ENCODE measurements at regions of chr1 and their contacts with region 1.

Region 1: GRCh38 chr1:112715264-112716053 is at the start of gene PPM1J:
- DNase-seq: peak; percentile 86 to 99 (median 91)
- ATAC-seq: peak; percentile 89
- H3K4me3 ChIP-seq: peak within 1 kb of the TSS; percentile 81
- H3K4me3 Mint-ChIP-seq: peak within 1 kb of the TSS; percentile 86 to 95 (median 92)
- H3K27ac ChIP-seq: peak within 1 kb of the TSS; percentile 34
- H3K27ac Mint-ChIP-seq: peak within 1 kb of the TSS in 8 of 9 donors; percentile 63 to 91 (median 82)
- H3K4me1 ChIP-seq: peaks cover 13% of the 10 kb centered on the region in 2 donors
- H3K4me1 Mint-ChIP-seq: peaks cover 17 to 37% (median 21%) of the 10 kb centered on the region in 7 donors
- H3K27me3 ChIP-seq: no peaks in the 10 kb centered on the region
- H3K27me3 Mint-ChIP-seq: peaks cover 0 to 45% (median 12%) of the 10 kb centered on the region in 5 donors
- total RNA-seq, gene PPM1J: 0.46 to 1.6 (median 0.50) TPM in 3 of 5 experiments, not detected in the others

Region 2: GRCh38 chr1:112390775-112391602 is 324.5 kb before region 1 on chr1:
- CTCF ChIA-PET with region 1: interaction called, 4 read pairs
- POLR2A ChIA-PET with region 1: no interaction called
- intact Hi-C with region 1: loop called (anchors 1 to 2 kb)
- DNase-seq: peak; percentile 49 to 78 (median 75)
- ATAC-seq: peak; percentile 90
- H3K4me3 ChIP-seq: no peak overlapping the region
- H3K4me3 Mint-ChIP-seq: peak overlapping the region in 5 of 10 donors; percentile 7 to 78 (median 54)
- H3K27ac ChIP-seq: no peak overlapping the region
- H3K27ac Mint-ChIP-seq: peak overlapping the region in 1 of 9 donors; percentile 62
- H3K4me1 ChIP-seq: peaks cover 7 to 9% of the 10 kb centered on the region in 2 donors
- H3K4me1 Mint-ChIP-seq: peaks cover 7 to 34% (median 15%) of the 10 kb centered on the region in 7 donors
- H3K27me3 ChIP-seq: no peaks in the 10 kb centered on the region
- H3K27me3 Mint-ChIP-seq: peaks cover 9 to 50% (median 39%) of the 10 kb centered on the region in 5 donors

Region 3: GRCh38 chr1:112674439-112674985 is 40.9 kb before region 1 on chr1 and contains the start of gene MOV10:
- CTCF ChIA-PET with region 1: interaction called, 4 read pairs
- POLR2A ChIA-PET with region 1: interaction called, 7 read pairs
- intact Hi-C with region 1: loop called (anchors 1 to 2 kb)
- DNase-seq: peak; percentile 38 to 62 (median 59)
- ATAC-seq: peak; percentile 73
- H3K4me3 ChIP-seq: peak within 1 kb of the TSS; percentile 92
- H3K4me3 Mint-ChIP-seq: peak within 1 kb of the TSS; percentile 94 to 99 (median 97)
- H3K27ac ChIP-seq: peak within 1 kb of the TSS; percentile 88
- H3K27ac Mint-ChIP-seq: peak within 1 kb of the TSS; percentile 90 to 98 (median 95)
- H3K4me1 ChIP-seq: peaks cover 17 to 19% of the 10 kb centered on the region in 2 donors
- H3K4me1 Mint-ChIP-seq: peaks cover 37 to 62% (median 58%) of the 10 kb centered on the region in 7 donors
- H3K27me3 ChIP-seq: no peaks in the 10 kb centered on the region
- H3K27me3 Mint-ChIP-seq: no peaks in the 10 kb centered on the region
- total RNA-seq, gene MOV10: 85.5 to 126 (median 90.1) TPM

Region 4: DNA sequence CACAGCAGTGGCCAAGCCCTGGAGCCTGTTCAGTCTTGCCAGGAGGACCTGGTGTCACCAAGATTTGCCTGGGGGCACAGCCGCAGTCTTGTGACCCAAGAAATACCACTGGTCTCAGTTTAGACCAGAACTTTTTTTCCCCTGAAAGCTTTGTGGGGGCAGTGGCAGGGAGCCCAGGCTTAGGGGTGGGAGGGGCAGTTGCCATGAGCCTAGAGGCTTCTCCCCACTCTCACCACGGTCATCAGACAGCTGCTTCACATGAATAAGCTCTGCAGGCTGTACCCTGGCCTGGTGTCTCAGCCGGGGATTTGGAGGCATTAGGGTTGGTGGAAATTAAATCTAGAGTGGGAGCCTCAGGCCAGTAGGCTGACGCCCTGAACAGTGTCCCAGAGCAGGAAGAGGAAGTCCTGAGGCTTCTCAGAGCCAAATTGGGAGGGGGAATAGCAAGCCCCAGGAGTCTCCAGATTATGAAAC is 166.8 kb after region 1 on chr1:
- CTCF ChIA-PET with region 1: interaction called, 3 read pairs
- POLR2A ChIA-PET with region 1: no interaction called
- intact Hi-C with region 1: loop called (anchors 1 kb)
- DNase-seq: no peak
- ATAC-seq: peak; percentile 16
- H3K4me3 ChIP-seq: no peak overlapping the region
- H3K4me3 Mint-ChIP-seq: no peak overlapping the region
- H3K27ac ChIP-seq: no peak overlapping the region
- H3K27ac Mint-ChIP-seq: no peak overlapping the region
- H3K4me1 ChIP-seq: no peaks in the 10 kb centered on the region
- H3K4me1 Mint-ChIP-seq: peaks cover 0 to 3% (median 0%) of the 10 kb centered on the region in 7 donors
- H3K27me3 ChIP-seq: no peaks in the 10 kb centered on the region
- H3K27me3 Mint-ChIP-seq: peaks cover 0 to 24% (median 4%) of the 10 kb centered on the region in 5 donors

Region 5: DNA sequence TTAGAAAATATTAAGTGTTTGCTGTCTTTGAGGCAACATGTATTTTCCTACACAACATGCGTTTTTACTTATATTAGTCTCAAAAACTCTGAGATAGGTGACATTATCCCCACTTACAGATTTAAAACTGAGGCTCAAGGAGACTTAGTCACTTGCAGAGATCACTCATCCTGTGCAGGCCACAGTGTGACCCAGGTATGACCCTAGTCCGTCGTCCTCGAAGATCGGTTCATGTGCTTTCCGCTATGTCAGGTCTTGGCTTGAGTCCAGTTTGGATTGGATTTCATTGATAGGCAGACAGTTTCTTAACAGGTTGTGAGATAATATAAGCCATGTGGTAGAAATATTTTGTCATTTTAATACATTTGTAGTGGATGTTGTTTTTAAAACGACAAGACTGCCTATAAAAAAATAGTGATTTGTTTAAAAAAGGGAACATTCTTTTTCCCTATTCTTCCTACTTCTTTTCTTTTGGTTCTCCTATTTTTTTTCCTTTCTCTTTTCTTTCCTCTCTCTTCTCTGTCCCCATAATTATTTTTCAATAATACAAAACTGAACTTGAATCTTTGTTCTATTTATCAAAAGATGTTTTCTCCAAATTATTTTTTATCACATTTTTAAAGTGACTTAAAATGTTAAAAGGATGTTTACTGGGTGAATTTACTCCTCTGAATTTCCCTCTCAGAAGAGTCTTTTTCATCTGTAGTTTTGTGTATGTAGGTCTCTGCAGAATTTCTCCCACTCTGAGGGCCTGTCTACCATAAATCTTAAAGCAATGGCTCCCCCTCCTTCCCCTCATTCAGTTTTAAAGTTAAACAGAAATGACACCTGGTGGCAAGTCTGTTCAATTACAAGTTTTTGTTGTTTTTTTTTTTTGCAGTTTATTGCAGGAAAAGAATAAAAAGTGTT is 962.0 kb after region 1 on chr1:
- CTCF ChIA-PET with region 1: interaction called, 5 read pairs
- POLR2A ChIA-PET with region 1: no interaction called
- intact Hi-C with region 1: loop called (anchors 1 to 2 kb)
- DNase-seq: peak in 5 of 9 donors; percentile 23 to 49 (median 39)
- ATAC-seq: peak; percentile 60
- H3K4me3 ChIP-seq: no peak overlapping the region
- H3K4me3 Mint-ChIP-seq: no peak overlapping the region
- H3K27ac ChIP-seq: no peak overlapping the region
- H3K27ac Mint-ChIP-seq: no peak overlapping the region
- H3K4me1 ChIP-seq: no peaks in the 10 kb centered on the region
- H3K4me1 Mint-ChIP-seq: peaks cover 0 to 10% (median 0%) of the 10 kb centered on the region in 7 donors
- H3K27me3 ChIP-seq: no peaks in the 10 kb centered on the region
- H3K27me3 Mint-ChIP-seq: no peaks in the 10 kb centered on the region

Region 6: GRCh38 chr1:113871597-113872113 is 1156.2 kb after region 1 on chr1 and contains the start of gene PTPN22:
- CTCF ChIA-PET with region 1: no interaction called
- POLR2A ChIA-PET with region 1: no interaction called
- intact Hi-C with region 1: loop called in 1 of 2 experiments (anchors 5 kb)
- DNase-seq: peak; percentile 41 to 91 (median 87)
- ATAC-seq: peak; percentile 98
- H3K4me3 ChIP-seq: peak within 1 kb of the TSS; percentile 81
- H3K4me3 Mint-ChIP-seq: peak within 1 kb of the TSS; percentile 82 to 95 (median 92)
- H3K27ac ChIP-seq: peak within 1 kb of the TSS; percentile 87
- H3K27ac Mint-ChIP-seq: peak within 1 kb of the TSS; percentile 94 to 99 (median 98)
- H3K4me1 ChIP-seq: peaks cover 30 to 65% of the 10 kb centered on the region in 2 donors
- H3K4me1 Mint-ChIP-seq: peaks cover 37 to 77% (median 72%) of the 10 kb centered on the region in 7 donors
- H3K27me3 ChIP-seq: no peaks in the 10 kb centered on the region
- H3K27me3 Mint-ChIP-seq: no peaks in the 10 kb centered on the region
- total RNA-seq, gene PTPN22: 22.2 to 76.7 (median 27.5) TPM

Region 7: DNA sequence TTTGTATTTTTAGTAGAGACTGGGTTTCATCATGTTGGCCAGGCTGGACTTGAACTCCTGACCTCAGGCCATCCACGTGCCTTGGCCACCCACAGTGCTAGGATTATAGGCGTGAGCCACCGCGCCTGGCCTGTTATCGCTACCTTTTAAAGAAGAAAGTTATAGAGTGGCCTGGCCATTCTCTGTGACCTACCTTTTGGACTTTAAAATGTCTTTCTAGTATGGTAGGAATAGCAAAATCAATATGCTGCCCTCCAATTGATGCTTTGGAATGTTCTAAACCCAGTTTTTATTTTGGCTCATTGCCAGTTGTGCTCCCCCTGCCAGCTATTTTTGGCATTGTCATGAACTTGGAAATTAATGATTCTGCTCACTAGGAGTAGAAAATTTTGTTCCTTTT is 1233.5 kb after region 1 on chr1:
- CTCF ChIA-PET with region 1: no interaction called
- POLR2A ChIA-PET with region 1: no interaction called
- intact Hi-C with region 1: loop called in 1 of 2 experiments (anchors 2 kb)
- DNase-seq: peak in 5 of 9 donors; percentile 16 to 53 (median 41)
- ATAC-seq: no peak
- H3K4me3 ChIP-seq: no peak overlapping the region
- H3K4me3 Mint-ChIP-seq: peak overlapping the region in 9 of 10 donors; percentile 36 to 88 (median 72)
- H3K27ac ChIP-seq: peak overlapping the region; percentile 73
- H3K27ac Mint-ChIP-seq: peak overlapping the region in 8 of 9 donors; percentile 92 to 99 (median 97)
- H3K4me1 ChIP-seq: peaks cover 42 to 68% of the 10 kb centered on the region in 2 donors
- H3K4me1 Mint-ChIP-seq: peaks cover 33 to 95% (median 85%) of the 10 kb centered on the region in 7 donors
- H3K27me3 ChIP-seq: no peaks in the 10 kb centered on the region
- H3K27me3 Mint-ChIP-seq: no peaks in the 10 kb centered on the region

Measured in naive thymus-derived CD4-positive, alpha-beta T cell (primary cell).